Endothelial cell of umbilical vein (primary cell): ENCODE measurements at regions of chr1 and their contacts with region 1.

Region 1: DNA sequence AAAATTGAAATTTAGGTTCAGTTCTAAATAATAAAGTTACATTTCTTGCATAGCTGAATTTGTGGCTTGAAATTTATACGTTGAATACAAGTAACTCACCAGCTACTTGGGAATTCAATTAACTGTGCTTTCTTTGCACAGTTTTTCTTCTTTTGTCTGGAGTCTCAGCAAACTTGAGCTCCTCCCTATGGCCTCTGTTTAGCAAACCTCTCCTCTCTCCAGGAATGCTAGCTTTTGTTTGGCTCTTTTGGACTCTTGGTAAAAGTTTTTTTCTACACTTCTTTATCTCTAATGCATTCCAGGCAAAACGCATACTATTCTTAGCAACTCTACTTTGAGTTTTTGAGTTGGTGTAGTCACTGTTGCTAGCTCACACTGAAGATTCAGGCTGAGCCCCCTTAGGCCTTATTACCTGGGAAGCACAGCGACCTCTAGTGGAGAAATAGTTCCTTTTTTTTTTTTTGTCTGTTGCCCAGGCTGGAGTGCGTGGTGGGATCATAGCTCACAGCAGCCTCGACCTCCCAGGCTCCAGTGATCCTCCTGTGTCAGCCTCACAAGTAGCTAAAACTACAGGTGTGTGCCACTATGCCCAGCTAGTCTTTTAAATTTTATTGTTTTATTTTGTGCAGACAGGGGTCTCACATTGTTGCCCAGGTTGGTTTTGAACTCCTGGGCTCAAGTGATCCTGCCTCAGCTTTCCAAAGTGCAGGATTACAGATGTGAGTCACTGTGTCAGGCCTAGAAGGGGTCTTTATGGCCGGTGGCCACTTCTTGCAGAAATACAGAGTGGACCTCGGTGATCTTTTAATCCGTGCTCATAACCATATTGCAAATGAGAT is 61.7 kb downstream of the CASQ2 start:
- DNase-seq: peak; percentile 39
- H3K4me3 ChIP-seq: no peak overlapping the region
- H3K27ac ChIP-seq: no peak overlapping the region
- H3K4me1 ChIP-seq: no peaks in the 10 kb centered on the region
- H3K27me3 ChIP-seq: peaks cover 0 to 12% of the 10 kb centered on the region in 2 experiments
- CTCF ChIP-seq: peak; percentile 52 to 55
- POLR2A ChIP-seq: no peak

Region 2: GRCh38 chr1:115545791-115546733 is 160.7 kb before region 1 on chr1:
- CTCF ChIA-PET with region 1: interaction called, 3 read pairs
- POLR2A ChIA-PET with region 1: no interaction called
- dilution Hi-C with region 1: no loop called
- intact Hi-C with region 1: loop called (anchors 5 kb)
- DNase-seq: peak; percentile 56
- H3K4me3 ChIP-seq: no peak overlapping the region
- H3K27ac ChIP-seq: peak overlapping the region; percentile 6
- H3K4me1 ChIP-seq: peaks cover 6% of the 10 kb centered on the region
- H3K27me3 ChIP-seq: peaks cover 0 to 2% of the 10 kb centered on the region in 2 experiments
- CTCF ChIP-seq: peak; percentile 54 to 61
- POLR2A ChIP-seq: no peak

Region 3: DNA sequence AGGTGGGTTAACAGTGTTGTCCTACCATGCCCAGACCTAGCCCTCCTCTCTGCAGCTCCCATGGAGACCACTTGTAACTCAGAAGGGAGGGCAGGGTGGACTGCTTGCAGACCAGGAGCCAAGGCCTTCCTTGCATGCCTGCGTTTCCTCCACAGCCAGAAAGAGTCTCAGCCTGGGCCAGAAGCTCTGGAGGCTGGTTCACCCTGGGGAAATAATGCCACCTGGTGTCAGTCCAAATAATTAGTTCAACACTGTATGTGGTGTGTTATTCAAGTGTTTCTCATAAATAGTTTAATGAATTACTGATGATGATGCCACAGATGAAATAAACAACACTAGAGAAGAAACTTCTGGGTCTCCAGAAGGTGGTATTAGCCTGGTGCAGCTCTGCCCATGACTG is 81.9 kb before region 1 on chr1:
- CTCF ChIA-PET with region 1: interaction called, 12 read pairs
- POLR2A ChIA-PET with region 1: no interaction called
- dilution Hi-C with region 1: no loop called
- intact Hi-C with region 1: no loop called
- DNase-seq: no peak
- H3K4me3 ChIP-seq: no peak overlapping the region
- H3K27ac ChIP-seq: no peak overlapping the region
- H3K4me1 ChIP-seq: no peaks in the 10 kb centered on the region
- H3K27me3 ChIP-seq: peaks cover 0 to 7% of the 10 kb centered on the region in 2 experiments
- CTCF ChIP-seq: no peak
- POLR2A ChIP-seq: no peak

Region 4: DNA sequence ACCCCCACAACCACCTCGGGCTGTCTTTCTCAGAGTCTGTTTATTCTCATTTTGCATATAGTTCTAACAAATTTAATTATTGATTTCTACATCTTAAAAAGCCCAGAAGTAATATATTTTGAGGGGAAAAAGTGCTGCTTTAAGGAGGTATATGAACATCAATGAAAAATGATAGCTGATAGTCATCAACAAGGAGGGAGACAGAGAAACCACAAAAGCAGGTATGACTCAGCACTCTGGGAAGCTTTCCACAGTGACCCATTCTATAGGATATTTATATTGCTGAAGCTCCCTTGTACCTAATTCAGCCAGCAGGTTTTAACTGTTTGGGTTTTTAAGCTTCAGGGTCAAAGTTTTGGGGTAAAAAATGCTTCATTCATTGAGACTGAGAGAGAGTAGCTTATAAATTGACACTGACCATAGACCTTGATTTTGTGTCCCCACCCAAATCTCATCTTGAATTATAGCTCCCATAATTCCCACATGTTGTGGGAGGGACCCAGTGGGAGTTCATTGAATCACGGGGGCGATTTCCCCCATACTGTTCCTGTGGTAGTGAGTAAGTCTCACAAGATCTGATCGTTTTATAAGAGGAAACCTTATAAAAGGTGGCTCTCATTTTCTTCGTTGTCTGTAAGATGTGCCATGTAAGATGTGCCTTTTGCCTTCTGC is 37.7 kb before region 1 on chr1:
- CTCF ChIA-PET with region 1: interaction called, 30 read pairs
- POLR2A ChIA-PET with region 1: no interaction called
- dilution Hi-C with region 1: no loop called
- intact Hi-C with region 1: no loop called
- DNase-seq: peak; percentile 50
- H3K4me3 ChIP-seq: no peak overlapping the region
- H3K27ac ChIP-seq: peak overlapping the region; percentile 38
- H3K4me1 ChIP-seq: peaks cover 9% of the 10 kb centered on the region
- H3K27me3 ChIP-seq: no peaks in the 10 kb centered on the region
- CTCF ChIP-seq: no peak
- POLR2A ChIP-seq: no peak

Region 5: DNA sequence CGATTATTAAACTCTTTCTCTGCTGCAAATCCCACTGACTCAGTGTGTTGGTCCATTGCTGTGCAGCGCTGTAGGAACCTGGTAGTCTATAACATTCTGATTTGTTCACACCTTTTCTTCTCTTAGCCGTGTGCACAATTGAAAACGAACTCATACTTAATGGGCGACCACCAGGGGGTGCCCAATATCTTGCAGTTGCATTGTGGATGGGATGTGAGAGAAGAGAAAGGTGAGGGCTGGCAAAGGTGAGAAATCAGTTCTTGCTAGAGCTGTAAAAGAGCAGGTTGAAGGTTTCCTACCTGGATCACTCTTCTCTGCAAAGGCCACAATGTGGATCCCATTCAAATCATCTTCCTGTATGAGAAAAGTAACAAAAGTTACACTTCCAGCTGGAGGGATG is 10.7 kb after region 1 on chr1:
- CTCF ChIA-PET with region 1: interaction called, 33 read pairs
- POLR2A ChIA-PET with region 1: no interaction called
- dilution Hi-C with region 1: no loop called
- intact Hi-C with region 1: no loop called
- DNase-seq: peak; percentile 30
- H3K4me3 ChIP-seq: no peak overlapping the region
- H3K27ac ChIP-seq: no peak overlapping the region
- H3K4me1 ChIP-seq: no peaks in the 10 kb centered on the region
- H3K27me3 ChIP-seq: peaks cover 2 to 16% of the 10 kb centered on the region in 2 experiments
- CTCF ChIP-seq: peak; percentile 41 to 56
- POLR2A ChIP-seq: no peak

Region 6: DNA sequence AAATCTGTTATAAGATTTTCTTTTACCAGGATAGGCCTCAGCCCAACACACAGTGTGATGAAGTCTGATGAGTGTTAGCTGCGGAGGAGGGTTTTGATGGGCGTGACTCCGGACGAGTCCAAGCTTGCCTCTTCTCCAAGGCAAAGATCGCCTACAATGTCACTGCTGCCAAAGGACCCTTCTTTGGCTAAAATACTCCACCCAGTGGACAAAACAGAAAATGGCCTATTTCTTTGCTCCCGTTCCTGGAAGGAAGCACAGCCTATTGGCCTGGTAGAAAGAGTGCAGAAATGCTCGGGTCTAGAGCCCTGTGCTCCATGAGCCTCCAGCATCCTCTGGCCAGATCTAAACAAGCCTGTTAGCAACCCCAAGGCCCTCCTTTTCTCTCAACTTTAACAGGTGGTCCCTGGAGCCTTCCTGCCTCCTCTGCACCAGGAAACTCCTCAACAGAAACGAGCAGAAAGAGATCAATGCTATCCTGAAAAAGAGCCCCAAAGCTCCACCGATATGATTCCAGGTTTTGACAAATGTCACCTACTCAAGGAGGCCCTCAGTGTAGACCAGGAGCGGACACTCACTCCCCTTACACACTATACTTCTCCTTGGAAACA is 65.1 kb after region 1 on chr1:
- CTCF ChIA-PET with region 1: interaction called, 18 read pairs
- POLR2A ChIA-PET with region 1: no interaction called
- dilution Hi-C with region 1: no loop called
- intact Hi-C with region 1: no loop called
- DNase-seq: peak; percentile 73
- H3K4me3 ChIP-seq: no peak overlapping the region
- H3K27ac ChIP-seq: no peak overlapping the region
- H3K4me1 ChIP-seq: no peaks in the 10 kb centered on the region
- H3K27me3 ChIP-seq: peaks cover 0 to 13% of the 10 kb centered on the region in 2 experiments
- CTCF ChIP-seq: peak; percentile 58 to 69
- POLR2A ChIP-seq: no peak

Region 7: GRCh38 chr1:115946116-115946515 is 239.3 kb after region 1 on chr1:
- CTCF ChIA-PET with region 1: no interaction called
- POLR2A ChIA-PET with region 1: no interaction called
- dilution Hi-C with region 1: no loop called
- intact Hi-C with region 1: no loop called
- DNase-seq: no peak
- H3K4me3 ChIP-seq: no peak overlapping the region
- H3K27ac ChIP-seq: no peak overlapping the region
- H3K4me1 ChIP-seq: no peaks in the 10 kb centered on the region
- H3K27me3 ChIP-seq: peaks cover 0 to 2% of the 10 kb centered on the region in 2 experiments
- CTCF ChIP-seq: no peak
- POLR2A ChIP-seq: no peak